Right cardiac atrium (tissue), 5 donors: ENCODE measurements at regions of chr1 and their contacts with region 1.

Region 1: GRCh38 chr1:3012456-3013291 is 8.6 kb upstream of the ACTRT2 start:
- DNase-seq: peak; percentile 57 to 86 (median 85)
- ATAC-seq: peak; percentile 57 to 80
- H3K4me3 ChIP-seq: no peak overlapping the region
- H3K27ac ChIP-seq: no peak overlapping the region
- H3K4me1 ChIP-seq: no peaks in the 10 kb centered on the region
- H3K27me3 ChIP-seq: no peaks in the 10 kb centered on the region

Region 2: GRCh38 chr1:3283849-3284248 is 271.2 kb after region 1 on chr1:
- intact Hi-C with region 1: loop called in 3 of 4 experiments (anchors 2 to 5 kb)
- DNase-seq: peak; percentile 40 to 84 (median 71)
- ATAC-seq: peak; percentile 54 to 65
- H3K4me3 ChIP-seq: no peak overlapping the region
- H3K27ac ChIP-seq: no peak overlapping the region
- H3K4me1 ChIP-seq: no peaks in the 10 kb centered on the region
- H3K27me3 ChIP-seq: no peaks in the 10 kb centered on the region

Region 3: GRCh38 chr1:3403388-3404231 is 390.9 kb after region 1 on chr1:
- intact Hi-C with region 1: loop called in 1 of 4 experiments (anchors 5 kb)
- DNase-seq: peak in 1 of 3 donors; percentile 40
- ATAC-seq: no peak
- H3K4me3 ChIP-seq: no peak overlapping the region
- H3K27ac ChIP-seq: no peak overlapping the region
- H3K4me1 ChIP-seq: no peaks in the 10 kb centered on the region
- H3K27me3 ChIP-seq: no peaks in the 10 kb centered on the region

Region 4: DNA sequence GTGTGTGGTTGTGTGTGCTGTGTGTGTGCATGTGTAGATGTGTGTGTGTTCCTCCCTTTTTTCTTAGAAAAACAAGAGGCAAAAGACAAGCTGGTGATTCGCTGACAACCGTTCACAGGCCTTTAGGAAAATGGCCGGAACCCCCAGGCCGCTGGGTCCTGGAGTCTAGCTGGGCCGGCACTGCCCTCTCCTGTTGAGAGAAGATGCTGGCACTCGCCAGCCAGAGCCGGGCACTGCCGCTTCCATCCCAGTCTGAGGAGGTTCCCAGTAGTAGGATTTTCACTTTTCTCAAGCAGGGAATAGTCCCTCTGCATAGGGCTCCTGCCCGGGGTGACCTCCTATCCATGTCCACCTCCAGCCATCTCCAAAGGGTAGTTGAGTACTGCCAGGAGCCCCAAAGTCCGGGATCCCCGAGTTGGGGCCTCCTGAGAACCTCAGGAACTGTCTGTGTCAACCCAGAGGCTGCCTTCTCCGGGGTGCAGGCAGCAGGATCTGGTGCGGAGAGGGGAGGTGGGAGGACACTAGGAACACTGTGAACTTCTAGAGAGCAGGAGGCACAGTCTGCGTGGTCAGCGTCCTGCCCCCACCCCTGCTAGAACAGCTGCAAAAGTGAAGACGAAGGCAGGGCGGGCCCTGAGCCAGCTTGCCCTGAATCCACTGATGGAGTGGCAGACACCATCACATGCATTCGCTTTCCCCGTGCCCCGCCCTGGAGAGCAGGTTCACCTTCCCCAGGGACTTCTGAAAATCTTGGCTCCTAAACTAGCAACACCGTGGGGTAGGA is 397.7 kb after region 1 on chr1:
- intact Hi-C with region 1: loop called in 3 of 4 experiments (anchors 2 to 5 kb)
- DNase-seq: peak; percentile 67 to 91 (median 87)
- ATAC-seq: peak; percentile 74 to 83
- H3K4me3 ChIP-seq: no peak overlapping the region
- H3K27ac ChIP-seq: no peak overlapping the region
- H3K4me1 ChIP-seq: no peaks in the 10 kb centered on the region
- H3K27me3 ChIP-seq: no peaks in the 10 kb centered on the region

Region 5: GRCh38 chr1:3423245-3423829 is 410.7 kb after region 1 on chr1:
- intact Hi-C with region 1: loop called in 2 of 4 experiments (anchors 5 kb)
- DNase-seq: peak; percentile 76 to 88 (median 87)
- ATAC-seq: peak; percentile 84 to 85
- H3K4me3 ChIP-seq: no peak overlapping the region
- H3K27ac ChIP-seq: peak overlapping the region; percentile 8
- H3K4me1 ChIP-seq: no peaks in the 10 kb centered on the region
- H3K27me3 ChIP-seq: no peaks in the 10 kb centered on the region

Region 6: DNA sequence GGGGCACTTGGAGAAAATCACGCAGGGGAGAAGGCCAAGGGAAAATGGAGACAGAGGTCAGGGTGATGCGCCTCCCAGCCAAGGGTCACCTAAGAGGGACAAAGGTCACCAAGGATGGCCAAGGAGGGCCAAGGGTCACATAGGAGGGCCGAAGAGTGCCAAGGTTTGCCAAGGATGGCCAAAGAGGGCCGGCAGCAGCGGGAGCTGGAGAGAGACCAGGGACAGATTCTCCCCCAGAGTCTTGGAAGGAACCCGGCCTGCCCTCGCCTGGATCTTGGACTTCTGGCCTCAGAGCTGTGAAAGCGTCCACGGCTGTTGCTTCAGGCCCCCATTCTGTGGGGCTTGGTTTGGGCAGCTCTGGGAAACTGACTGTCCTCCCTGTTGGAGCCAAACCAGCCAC is 416.2 kb after region 1 on chr1:
- intact Hi-C with region 1: loop called in 2 of 4 experiments (anchors 5 kb)
- DNase-seq: peak in 1 of 3 donors; percentile 30
- ATAC-seq: no peak
- H3K4me3 ChIP-seq: no peak overlapping the region
- H3K27ac ChIP-seq: no peak overlapping the region
- H3K4me1 ChIP-seq: no peaks in the 10 kb centered on the region
- H3K27me3 ChIP-seq: no peaks in the 10 kb centered on the region